Endothelial cell of umbilical vein (primary cell): ENCODE measurements at regions of chr12 and their contacts with region 1.

Region 1: GRCh38 chr12:117836999-117837736 is 131.6 kb downstream of the KSR2 start:
- DNase-seq: peak; percentile 87
- H3K4me3 ChIP-seq: peak overlapping the region in 1 of 3 experiments; percentile 29
- H3K27ac ChIP-seq: no peak overlapping the region
- H3K4me1 ChIP-seq: peaks cover 5% of the 10 kb centered on the region
- H3K27me3 ChIP-seq: no peaks in the 10 kb centered on the region
- CTCF ChIP-seq: peak; percentile 94 to 98
- POLR2A ChIP-seq: no peak

Region 2: GRCh38 chr12:117212563-117213190 is 624.5 kb before region 1 on chr12:
- CTCF ChIA-PET with region 1: interaction called, 14 read pairs
- POLR2A ChIA-PET with region 1: no interaction called
- dilution Hi-C with region 1: no loop called
- intact Hi-C with region 1: loop called (anchors 5 kb)
- DNase-seq: peak; percentile 70
- H3K4me3 ChIP-seq: no peak overlapping the region
- H3K27ac ChIP-seq: no peak overlapping the region
- H3K4me1 ChIP-seq: no peaks in the 10 kb centered on the region
- H3K27me3 ChIP-seq: peaks cover 0 to 2% of the 10 kb centered on the region in 2 experiments
- CTCF ChIP-seq: peak; percentile 82 to 86
- POLR2A ChIP-seq: no peak

Region 3: DNA sequence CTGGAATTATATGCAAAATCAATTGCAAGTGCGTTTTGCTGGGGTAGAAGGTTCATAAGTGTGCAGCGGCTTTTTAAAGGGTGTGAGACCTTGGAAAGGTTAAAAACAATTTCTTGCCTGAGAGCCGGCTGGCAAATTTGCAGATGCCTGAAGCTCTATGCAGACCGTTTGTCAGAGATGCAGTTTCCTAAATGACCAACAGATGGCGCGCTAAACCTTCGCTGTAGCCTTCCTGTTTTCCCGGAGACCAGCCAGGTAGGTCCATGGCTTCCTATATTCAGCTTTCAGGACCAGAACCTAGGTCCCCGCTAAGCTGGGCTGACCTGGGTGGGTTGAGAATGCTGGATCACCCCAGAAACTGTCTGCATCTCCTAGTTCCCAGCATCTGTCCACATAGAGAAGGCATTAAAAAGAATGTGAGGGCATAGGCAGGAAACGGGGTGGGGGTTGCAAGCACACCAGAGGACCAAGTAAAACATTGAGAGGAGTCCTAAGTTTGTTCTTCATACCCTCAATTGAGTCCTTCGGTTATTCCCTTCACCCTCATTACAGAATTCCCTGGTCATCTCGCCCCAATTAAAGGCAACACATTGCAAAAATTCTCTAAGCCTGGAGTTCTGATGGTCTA is 470.0 kb before region 1 on chr12:
- CTCF ChIA-PET with region 1: interaction called, 530 read pairs
- POLR2A ChIA-PET with region 1: no interaction called
- dilution Hi-C with region 1: loop called (anchors 25 kb)
- intact Hi-C with region 1: loop called (anchors 1 kb)
- DNase-seq: peak; percentile 79
- H3K4me3 ChIP-seq: no peak overlapping the region
- H3K27ac ChIP-seq: no peak overlapping the region
- H3K4me1 ChIP-seq: no peaks in the 10 kb centered on the region
- H3K27me3 ChIP-seq: peaks cover 14 to 17% of the 10 kb centered on the region in 2 experiments
- CTCF ChIP-seq: peak; percentile 82 to 87
- POLR2A ChIP-seq: no peak

Region 4: GRCh38 chr12:117472983-117473382 is 364.2 kb before region 1 on chr12:
- CTCF ChIA-PET with region 1: no interaction called
- POLR2A ChIA-PET with region 1: no interaction called
- dilution Hi-C with region 1: no loop called
- intact Hi-C with region 1: loop called (anchors 10 kb)
- DNase-seq: peak; percentile 16
- H3K4me3 ChIP-seq: no peak overlapping the region
- H3K27ac ChIP-seq: no peak overlapping the region
- H3K4me1 ChIP-seq: no peaks in the 10 kb centered on the region
- H3K27me3 ChIP-seq: no peaks in the 10 kb centered on the region
- CTCF ChIP-seq: peak; percentile 56 to 60
- POLR2A ChIP-seq: no peak

Region 5: DNA sequence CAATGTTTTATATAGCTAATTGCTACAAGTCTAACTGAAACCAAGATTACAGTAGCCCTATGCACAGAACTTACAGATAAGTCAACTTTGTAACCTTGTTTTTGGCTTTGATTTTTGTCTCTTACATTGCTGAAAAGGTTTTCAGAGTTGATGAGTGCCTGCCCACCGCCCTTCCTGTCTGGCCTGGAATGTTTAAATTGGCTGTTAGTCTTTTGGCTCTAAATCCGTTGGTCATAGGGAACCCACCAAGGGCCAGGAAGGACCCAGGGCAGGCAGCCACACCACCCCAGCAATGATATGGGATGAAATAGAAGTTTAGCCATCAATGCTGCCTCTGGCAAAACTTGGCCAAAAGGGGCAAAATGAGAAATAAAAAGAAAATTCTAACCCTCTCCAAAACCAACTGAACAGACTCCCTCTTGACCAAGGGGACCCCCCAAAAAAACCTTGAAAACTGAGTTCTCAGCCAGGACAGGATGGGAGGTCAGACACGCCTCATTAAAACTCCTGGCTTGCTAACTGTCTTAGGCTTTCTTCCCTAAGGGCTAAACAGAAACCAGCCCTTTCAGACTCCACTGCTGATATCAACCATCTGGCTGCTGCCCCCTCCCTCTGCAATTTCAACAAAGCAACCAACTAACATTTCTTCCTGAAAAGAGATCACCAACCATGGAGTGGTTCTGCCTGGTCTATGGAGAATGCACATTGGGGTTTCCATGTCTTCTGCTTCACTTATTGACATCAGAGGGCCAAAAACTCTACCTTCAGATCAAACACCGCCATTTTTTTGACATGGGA is 233.7 kb before region 1 on chr12:
- CTCF ChIA-PET with region 1: interaction called, 3 read pairs
- POLR2A ChIA-PET with region 1: no interaction called
- dilution Hi-C with region 1: loop called (anchors 25 kb)
- intact Hi-C with region 1: no loop called
- DNase-seq: peak; percentile 29
- H3K4me3 ChIP-seq: no peak overlapping the region
- H3K27ac ChIP-seq: no peak overlapping the region
- H3K4me1 ChIP-seq: no peaks in the 10 kb centered on the region
- H3K27me3 ChIP-seq: no peaks in the 10 kb centered on the region
- CTCF ChIP-seq: peak in 1 of 2 donors; percentile 15
- POLR2A ChIP-seq: no peak

Region 6: GRCh38 chr12:117685110-117685926 is 151.8 kb before region 1 on chr12:
- CTCF ChIA-PET with region 1: interaction called, 16 read pairs
- POLR2A ChIA-PET with region 1: no interaction called
- dilution Hi-C with region 1: no loop called
- intact Hi-C with region 1: loop called (anchors 1 kb)
- DNase-seq: peak; percentile 97
- H3K4me3 ChIP-seq: no peak overlapping the region
- H3K27ac ChIP-seq: peak overlapping the region; percentile 98
- H3K4me1 ChIP-seq: peaks cover 51% of the 10 kb centered on the region
- H3K27me3 ChIP-seq: no peaks in the 10 kb centered on the region
- CTCF ChIP-seq: no peak
- POLR2A ChIP-seq: no peak

Region 7: GRCh38 chr12:117857632-117858612 is 20.8 kb after region 1 on chr12:
- CTCF ChIA-PET with region 1: interaction called, 21 read pairs
- POLR2A ChIA-PET with region 1: no interaction called
- dilution Hi-C with region 1: no loop called
- intact Hi-C with region 1: no loop called
- DNase-seq: peak; percentile 58
- H3K4me3 ChIP-seq: no peak overlapping the region
- H3K27ac ChIP-seq: no peak overlapping the region
- H3K4me1 ChIP-seq: no peaks in the 10 kb centered on the region
- H3K27me3 ChIP-seq: no peaks in the 10 kb centered on the region
- CTCF ChIP-seq: peak; percentile 61 to 72
- POLR2A ChIP-seq: no peak

Region 8: DNA sequence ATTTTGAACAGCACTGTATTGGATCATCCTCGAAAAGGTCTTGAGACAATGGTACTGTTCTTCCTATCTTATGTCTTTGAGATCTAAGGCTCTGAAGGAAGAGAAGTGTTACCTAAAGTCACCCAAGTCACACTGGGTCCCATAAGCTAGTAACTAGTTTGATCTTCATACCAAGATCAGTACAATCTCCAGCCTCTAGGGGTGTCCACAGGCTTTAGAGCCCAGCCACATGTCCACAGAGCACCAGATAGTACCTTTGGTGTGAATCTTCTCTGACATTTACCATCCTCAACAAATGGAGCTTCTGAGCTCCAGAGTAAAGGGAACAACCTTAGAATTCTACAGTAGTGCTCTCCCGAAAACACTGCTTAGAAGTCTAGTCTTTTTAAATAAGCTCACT is 53.0 kb after region 1 on chr12:
- CTCF ChIA-PET with region 1: no interaction called
- POLR2A ChIA-PET with region 1: no interaction called
- dilution Hi-C with region 1: no loop called
- intact Hi-C with region 1: no loop called
- DNase-seq: no peak
- H3K4me3 ChIP-seq: no peak overlapping the region
- H3K27ac ChIP-seq: no peak overlapping the region
- H3K4me1 ChIP-seq: no peaks in the 10 kb centered on the region
- H3K27me3 ChIP-seq: no peaks in the 10 kb centered on the region
- CTCF ChIP-seq: no peak
- POLR2A ChIP-seq: no peak